ENCODE measurements at regions of chr10 and their contacts with region 1.

Region 1: GRCh38 chr10:92208736-92209327 is 82.0 kb downstream of the CPEB3 start:
- DNase-seq: no peak
- H3K4me3 ChIP-seq: no peak overlapping the region
- H3K27ac ChIP-seq: peak overlapping the region in 1 of 2 donors; percentile 40
- H3K4me1 ChIP-seq: no peaks in the 10 kb centered on the region
- H3K27me3 ChIP-seq: no peaks in the 10 kb centered on the region
- CTCF ChIP-seq: no peak
- POLR2A ChIP-seq: no peak

Region 2: DNA sequence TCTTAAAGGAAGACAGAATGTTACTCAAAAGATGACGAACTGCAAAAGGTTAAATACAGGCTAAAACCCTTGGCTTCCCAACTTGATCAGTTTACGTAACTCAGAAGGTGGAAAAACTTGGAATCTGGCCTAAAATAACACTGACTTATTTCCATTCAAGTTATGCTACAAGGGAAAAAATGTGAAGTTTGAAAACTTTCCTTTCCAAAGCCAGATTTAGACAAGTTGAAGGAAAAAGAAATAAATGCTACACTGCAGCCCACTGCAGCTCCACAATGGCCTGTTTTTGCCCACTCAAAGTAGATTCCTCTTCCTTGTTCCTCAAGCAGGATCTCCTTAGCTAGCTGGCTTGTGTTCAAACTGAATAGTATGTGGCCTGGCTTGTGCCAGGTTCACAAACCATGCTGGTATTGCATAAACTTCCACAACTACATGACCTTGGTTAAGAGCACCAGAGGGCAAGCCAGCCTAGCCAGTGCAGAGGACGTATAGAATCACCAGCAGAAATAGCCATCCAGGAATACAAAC is 84.2 kb before region 1 on chr10:
- intact Hi-C with region 1: no loop called
- DNase-seq: peak in 1 of 2 donors; percentile 75
- H3K4me3 ChIP-seq: no peak overlapping the region
- H3K27ac ChIP-seq: peak overlapping the region; percentile 87 to 88
- H3K4me1 ChIP-seq: peaks cover 0 to 34% of the 10 kb centered on the region in 2 donors
- H3K27me3 ChIP-seq: no peaks in the 10 kb centered on the region
- CTCF ChIP-seq: no peak
- POLR2A ChIP-seq: no peak

Region 3: GRCh38 chr10:92290837-92291615 is 82.2 kb after region 1 on chr10 and contains the starts of genes CPEB3 and MARCHF5:
- intact Hi-C with region 1: loop called (anchors 10 kb)
- DNase-seq: peak; percentile 94
- H3K4me3 ChIP-seq: peak within 1 kb of the TSS; percentile 80 to 93 (median 81)
- H3K27ac ChIP-seq: peak within 1 kb of the TSS; percentile 95 to 96
- H3K4me1 ChIP-seq: peaks cover 0 to 3% of the 10 kb centered on the region in 2 donors
- H3K27me3 ChIP-seq: no peaks in the 10 kb centered on the region
- CTCF ChIP-seq: peak; percentile 88 to 94 (median 92)
- POLR2A ChIP-seq: peak; percentile 13
- total RNA-seq, gene CPEB3: 3.8 to 12.1 (median 5.2) TPM
- total RNA-seq, gene MARCHF5: 15.5 to 33.5 (median 31.8) TPM

Measured in breast epithelium (tissue), 4 donors.